A673 (cell line): ENCODE measurements at regions of chr4 and their contacts with region 1.

Region 1: DNA sequence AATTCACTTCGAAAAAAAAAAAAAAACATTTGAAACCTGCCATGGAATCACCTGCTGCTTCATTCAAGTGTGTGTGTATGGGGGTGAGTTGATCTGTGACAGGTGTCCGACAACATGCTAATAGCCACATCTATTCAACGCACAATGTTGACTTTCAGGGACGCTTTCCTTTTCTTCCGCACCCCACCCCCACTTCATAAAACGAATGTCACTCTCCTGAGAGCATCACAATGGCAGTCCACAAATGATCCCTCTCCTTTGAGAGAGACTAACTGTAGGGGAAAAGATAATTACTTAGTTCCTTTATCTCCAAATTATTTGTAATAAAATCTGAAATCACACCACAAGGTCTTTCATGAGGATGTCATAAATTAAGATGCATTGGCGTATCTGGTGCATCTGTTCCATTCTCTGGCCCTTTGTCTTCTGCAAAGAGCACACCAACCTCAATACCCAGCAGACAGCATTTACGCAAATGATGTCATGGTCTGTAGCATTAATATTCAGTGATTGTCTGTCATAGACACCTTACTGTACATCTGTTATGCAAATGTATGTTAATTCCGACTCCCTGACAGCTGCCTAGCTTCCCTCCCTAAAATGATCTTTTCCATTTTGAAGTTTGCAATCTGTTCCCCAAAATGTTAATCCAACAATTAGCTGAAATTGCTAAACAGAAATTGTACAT is 640.0 kb upstream of the BOD1L1 start:
- DNase-seq: no peak
- H3K4me3 ChIP-seq: no peak overlapping the region
- H3K27ac ChIP-seq: no peak overlapping the region
- H3K4me1 ChIP-seq: no peaks in the 10 kb centered on the region
- H3K27me3 ChIP-seq: no peaks in the 10 kb centered on the region
- CTCF ChIP-seq: no peak

Region 2: DNA sequence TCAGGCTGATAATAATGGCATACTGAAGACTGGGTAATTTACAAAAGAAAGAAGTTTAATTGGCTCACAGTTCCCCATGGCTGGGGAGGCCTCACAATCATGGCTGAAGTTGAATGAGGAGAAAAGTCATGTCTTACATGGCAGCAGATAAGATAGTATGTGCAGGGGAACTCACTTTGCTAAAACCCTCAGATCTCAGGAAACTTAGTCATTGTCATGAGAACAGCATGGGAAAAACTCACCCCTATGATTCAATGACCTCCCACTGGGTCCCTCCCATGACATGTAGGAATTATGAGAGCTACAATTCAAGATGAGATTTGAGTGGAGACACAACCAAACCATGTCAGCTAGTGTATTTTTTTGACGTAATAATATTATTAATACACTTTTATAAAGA is 490.2 kb before region 1 on chr4:
- CTCF ChIA-PET with region 1: no interaction called
- POLR2A ChIA-PET with region 1: interaction called, 10 read pairs
- intact Hi-C with region 1: no loop called
- DNase-seq: no peak
- H3K4me3 ChIP-seq: no peak overlapping the region
- H3K27ac ChIP-seq: no peak overlapping the region
- H3K4me1 ChIP-seq: no peaks in the 10 kb centered on the region
- H3K27me3 ChIP-seq: no peaks in the 10 kb centered on the region
- CTCF ChIP-seq: no peak

Region 3: DNA sequence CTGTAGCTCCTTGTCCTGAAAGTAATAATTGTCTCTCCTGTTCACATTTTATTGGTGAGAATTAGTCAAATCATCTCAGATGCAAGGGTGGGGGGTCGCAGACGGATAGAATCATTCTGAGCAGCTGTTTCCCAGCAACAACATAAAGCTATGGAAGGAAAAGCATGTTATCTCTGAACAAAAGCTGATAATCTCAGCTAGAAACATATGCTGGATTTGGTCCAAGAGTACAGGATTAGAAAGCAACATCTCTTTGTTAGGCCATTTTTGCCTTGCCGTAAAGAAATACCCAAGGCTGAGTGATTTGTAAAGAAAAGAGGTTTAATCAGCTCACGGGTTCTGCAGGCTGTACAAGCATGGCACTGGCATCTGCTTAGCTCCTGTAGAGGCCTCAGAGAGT is 167.2 kb before region 1 on chr4:
- CTCF ChIA-PET with region 1: no interaction called
- POLR2A ChIA-PET with region 1: no interaction called
- intact Hi-C with region 1: no loop called
- DNase-seq: peak; percentile 54
- H3K4me3 ChIP-seq: no peak overlapping the region
- H3K27ac ChIP-seq: no peak overlapping the region
- H3K4me1 ChIP-seq: peaks cover 18% of the 10 kb centered on the region
- H3K27me3 ChIP-seq: no peaks in the 10 kb centered on the region
- CTCF ChIP-seq: no peak